Psoas muscle (tissue), 8 donors: ENCODE measurements at regions of chr9 and their contacts with region 1.

Region 1: DNA sequence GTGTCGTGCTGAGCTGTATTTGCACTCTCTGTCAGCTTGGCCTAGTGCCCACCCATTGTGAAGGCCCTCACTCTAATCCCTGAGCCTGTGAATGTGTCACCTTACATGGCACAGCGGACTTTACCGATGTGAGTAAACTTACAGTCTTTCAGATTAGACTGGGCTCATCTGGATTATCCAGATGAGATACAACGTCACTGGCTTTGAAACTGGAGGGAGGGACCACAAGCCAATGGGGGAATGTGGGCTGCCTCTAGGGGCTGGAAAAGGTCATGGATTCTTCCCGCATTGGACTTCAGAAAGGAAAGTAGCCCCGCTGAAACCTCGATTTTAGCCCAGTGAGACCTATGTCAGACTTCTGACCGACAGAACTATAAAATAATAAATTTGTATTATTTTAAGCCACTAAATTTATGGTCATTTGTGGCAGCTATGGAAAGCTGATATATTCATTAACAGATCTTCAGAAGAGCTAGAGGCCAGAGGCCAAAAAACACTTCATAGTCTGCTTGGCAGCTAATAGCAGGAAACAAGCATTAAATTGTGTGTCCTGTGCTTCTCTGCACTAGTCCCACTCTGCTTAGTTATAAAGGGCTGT is 139.0 kb upstream of the GAS1 start:
- DNase-seq: no peak
- ATAC-seq: peak in 1 of 4 donors; percentile 34
- H3K4me3 ChIP-seq: no peak overlapping the region
- H3K27ac ChIP-seq: peak overlapping the region; percentile 54
- H3K4me1 ChIP-seq: peaks cover 18% of the 10 kb centered on the region
- H3K27me3 ChIP-seq: no peaks in the 10 kb centered on the region
- CTCF ChIP-seq: no peak

Region 2: GRCh38 chr9:87039809-87040392 is 46.4 kb before region 1 on chr9:
- intact Hi-C with region 1: no loop called
- DNase-seq: no peak
- ATAC-seq: peak in 1 of 4 donors; percentile 34
- H3K4me3 ChIP-seq: no peak overlapping the region
- H3K27ac ChIP-seq: no peak overlapping the region
- H3K4me1 ChIP-seq: no peaks in the 10 kb centered on the region
- H3K27me3 ChIP-seq: no peaks in the 10 kb centered on the region
- CTCF ChIP-seq: no peak

Region 3: GRCh38 chr9:87148331-87149104 is 62.2 kb after region 1 on chr9:
- intact Hi-C with region 1: loop called in 1 of 2 experiments (anchors 5 kb)
- DNase-seq: peak; percentile 88 to 92
- ATAC-seq: peak; percentile 91 to 96 (median 92)
- H3K4me3 ChIP-seq: peak overlapping the region; percentile 66
- H3K27ac ChIP-seq: peak overlapping the region; percentile 94
- H3K4me1 ChIP-seq: peaks cover 20% of the 10 kb centered on the region
- H3K27me3 ChIP-seq: no peaks in the 10 kb centered on the region
- CTCF ChIP-seq: no peak